ENCODE measurements at regions of chr17 and their contacts with region 1.

Region 1: DNA sequence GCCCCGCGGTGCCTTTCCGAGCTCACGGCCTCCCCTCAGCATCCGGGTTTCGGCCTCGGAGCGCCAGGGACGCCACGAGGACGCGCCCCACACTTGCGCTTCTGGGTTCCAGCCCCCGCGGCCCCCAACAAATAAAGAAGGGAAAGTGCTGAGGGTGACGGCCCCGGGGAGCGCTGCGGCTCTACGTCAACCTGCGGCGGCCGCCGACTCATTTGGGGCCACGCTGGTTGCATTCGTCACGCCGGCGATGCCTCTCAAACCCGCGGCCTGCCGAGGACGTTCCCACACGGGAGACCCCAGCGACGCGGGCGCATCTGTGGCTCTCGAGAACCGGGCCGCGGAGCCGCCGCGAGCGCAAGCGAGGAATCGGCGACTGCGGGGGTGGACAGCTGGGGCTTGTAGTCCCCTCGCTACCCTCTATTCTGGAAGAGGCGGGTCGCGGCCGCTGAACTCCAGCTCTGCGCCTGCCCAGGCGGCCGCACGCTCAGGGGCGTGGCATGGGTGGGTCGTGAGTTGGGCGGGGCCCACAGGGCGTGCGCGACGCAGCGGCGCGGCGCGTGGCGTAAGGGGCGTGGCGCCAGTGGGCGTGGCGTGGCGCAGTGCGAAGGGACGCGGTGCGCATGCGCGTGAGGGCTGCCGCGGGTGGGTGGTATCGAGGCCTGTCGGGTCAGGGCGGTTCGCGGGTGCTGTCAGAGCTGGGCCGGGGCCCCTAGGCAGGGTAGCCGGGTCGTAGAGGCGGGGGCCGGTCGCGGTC is at the start of gene AMZ2:
- DNase-seq: peak; percentile 97
- H3K4me3 ChIP-seq: peak within 1 kb of the TSS; percentile 80
- H3K27ac ChIP-seq: peak within 1 kb of the TSS; percentile 90
- H3K4me1 ChIP-seq: peaks cover 86% of the 10 kb centered on the region
- CTCF ChIP-seq: no peak
- total RNA-seq, gene AMZ2: 105 and 117 TPM in 2 replicates

Region 2: GRCh38 chr17:68179236-68179925 is 68.2 kb before region 1 on chr17:
- CTCF ChIA-PET with region 1: interaction called, 3 read pairs
- POLR2A ChIA-PET with region 1: interaction called, 59 read pairs
- intact Hi-C with region 1: loop called (anchors 2 kb)
- DNase-seq: no peak
- H3K4me3 ChIP-seq: no peak overlapping the region
- H3K27ac ChIP-seq: no peak overlapping the region
- H3K4me1 ChIP-seq: peaks cover 3% of the 10 kb centered on the region
- CTCF ChIP-seq: no peak

Region 3: DNA sequence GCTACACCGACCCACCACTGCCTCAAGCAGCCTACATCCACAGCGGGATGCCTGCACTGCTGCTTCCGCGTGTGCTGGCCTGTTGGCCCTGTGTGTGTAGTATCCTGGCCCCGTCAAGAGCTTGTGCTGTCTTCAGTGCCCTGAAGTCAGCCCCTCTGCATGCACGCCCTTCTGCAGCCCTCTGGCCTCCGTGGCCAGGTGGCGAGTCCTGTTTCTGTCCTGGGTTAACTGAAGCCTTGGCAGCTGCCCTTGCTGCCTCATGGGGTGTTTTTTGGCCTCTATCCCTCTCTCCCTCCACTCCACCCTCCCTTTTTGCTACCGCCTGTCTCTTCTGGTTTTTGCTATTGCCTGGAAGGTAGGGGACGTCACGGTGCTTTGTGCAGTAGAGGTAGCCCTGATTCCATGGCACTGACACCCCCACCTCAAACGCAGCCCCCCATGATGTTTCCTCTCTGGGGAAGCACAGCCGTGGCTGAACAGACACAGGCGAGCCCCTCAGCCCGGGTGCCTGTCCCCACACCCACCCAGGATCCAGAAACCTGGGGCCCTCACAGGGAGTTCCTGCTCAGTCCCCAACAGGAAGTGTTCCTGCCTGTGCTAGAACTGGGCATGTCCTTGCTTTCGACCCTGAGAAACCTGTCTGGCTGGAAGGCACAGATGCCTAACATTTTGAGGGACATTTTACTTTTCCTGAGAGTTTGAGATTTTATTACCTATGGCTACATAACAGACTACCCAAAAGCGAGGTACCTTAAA is 18.6 kb before region 1 on chr17:
- CTCF ChIA-PET with region 1: interaction called, 5 read pairs
- POLR2A ChIA-PET with region 1: interaction called, 41 read pairs
- intact Hi-C with region 1: no loop called
- DNase-seq: no peak
- H3K4me3 ChIP-seq: no peak overlapping the region
- H3K27ac ChIP-seq: peak overlapping the region; percentile 83
- H3K4me1 ChIP-seq: peaks cover 79% of the 10 kb centered on the region
- CTCF ChIP-seq: no peak